B cell (primary cell): ENCODE measurements at regions of chr22 and their contacts with region 1.

Region 1: DNA sequence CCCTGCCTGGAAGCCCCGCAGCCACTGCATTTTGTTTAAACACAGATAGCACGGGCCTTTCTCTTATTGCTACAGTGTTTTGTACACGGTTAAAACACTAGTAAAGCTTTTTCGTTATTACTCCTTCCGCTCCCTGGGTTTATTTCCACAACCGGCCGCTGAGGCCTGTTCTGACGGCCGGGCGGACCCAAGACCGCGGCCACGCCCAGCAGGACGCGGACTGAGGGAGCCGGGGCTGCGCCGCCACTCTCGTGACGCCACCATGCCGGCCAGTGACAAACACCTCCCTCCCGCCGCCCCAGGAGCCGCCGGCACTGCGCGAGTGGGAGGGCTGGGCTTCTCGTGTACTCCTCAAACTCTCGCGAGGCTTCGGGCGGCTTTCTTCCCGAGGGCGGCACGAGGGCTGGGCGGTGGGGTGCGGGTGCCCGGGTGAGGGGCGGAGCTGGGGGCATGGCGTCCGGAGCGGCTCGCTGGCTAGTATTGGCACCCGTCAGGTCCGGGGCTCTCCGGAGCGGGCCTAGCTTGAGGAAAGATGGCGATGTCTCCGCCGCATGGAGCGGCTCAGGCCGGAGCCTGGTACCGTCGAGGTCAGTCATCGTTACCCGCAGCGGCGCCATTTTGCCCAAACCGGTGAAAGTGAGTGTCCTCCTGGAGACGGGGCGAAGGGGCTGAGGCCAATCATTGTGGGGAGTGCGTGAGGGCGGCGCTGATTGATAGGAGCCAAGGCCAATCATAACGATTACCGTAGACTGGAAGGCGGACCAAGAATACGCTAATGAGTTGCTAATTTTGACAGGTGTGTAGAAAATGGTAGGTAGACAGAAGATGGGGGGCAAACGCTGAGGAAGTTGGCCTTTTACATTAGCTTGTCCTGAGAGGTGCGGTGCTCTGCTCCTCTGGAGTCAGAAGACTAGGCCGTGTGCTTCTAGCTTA is at the start of gene SMDT1:
- DNase-seq: peak; percentile 100
- ATAC-seq: peak; percentile 86
- H3K4me3 ChIP-seq: peak within 1 kb of the TSS; percentile 66 to 92 (median 86)
- H3K4me3 Mint-ChIP-seq: peak within 1 kb of the TSS; percentile 96
- H3K27ac ChIP-seq: peak within 1 kb of the TSS; percentile 99
- H3K27ac Mint-ChIP-seq: peak within 1 kb of the TSS; percentile 97
- H3K4me1 ChIP-seq: peaks cover 22 to 32% of the 10 kb centered on the region in 2 donors
- H3K4me1 Mint-ChIP-seq: peaks cover 41% of the 10 kb centered on the region
- H3K27me3 ChIP-seq: no peaks in the 10 kb centered on the region
- H3K27me3 Mint-ChIP-seq: no peaks in the 10 kb centered on the region
- CTCF ChIP-seq: no peak
- total RNA-seq, gene SMDT1: 133 and 140 TPM in 2 replicates

Region 2: GRCh38 chr22:41998361-41999275 is 81.0 kb before region 1 on chr22 and contains the start of gene WBP2NL:
- CTCF ChIA-PET with region 1: no interaction called
- POLR2A ChIA-PET with region 1: interaction called, 17 read pairs
- intact Hi-C with region 1: no loop called
- DNase-seq: peak; percentile 95
- ATAC-seq: peak; percentile 100
- H3K4me3 ChIP-seq: peak within 1 kb of the TSS; percentile 36 to 88 (median 76)
- H3K4me3 Mint-ChIP-seq: peak within 1 kb of the TSS; percentile 99
- H3K27ac ChIP-seq: peak within 1 kb of the TSS; percentile 72 to 81
- H3K27ac Mint-ChIP-seq: peak within 1 kb of the TSS; percentile 99
- H3K4me1 ChIP-seq: peaks cover 15 to 23% of the 10 kb centered on the region in 2 donors
- H3K4me1 Mint-ChIP-seq: peaks cover 25% of the 10 kb centered on the region
- H3K27me3 ChIP-seq: peaks cover 0 to 10% (median 3%) of the 10 kb centered on the region in 4 experiments
- H3K27me3 Mint-ChIP-seq: no peaks in the 10 kb centered on the region
- CTCF ChIP-seq: no peak
- total RNA-seq, gene WBP2NL: 10.1 and 10.4 TPM in 2 replicates